Activated naive CD4-positive, alpha-beta T cell treated with anti-CD3 and anti-CD28 coated beads for 36 hours (primary cell): ENCODE measurements at regions of chr1 and their contacts with region 1.

Region 1: DNA sequence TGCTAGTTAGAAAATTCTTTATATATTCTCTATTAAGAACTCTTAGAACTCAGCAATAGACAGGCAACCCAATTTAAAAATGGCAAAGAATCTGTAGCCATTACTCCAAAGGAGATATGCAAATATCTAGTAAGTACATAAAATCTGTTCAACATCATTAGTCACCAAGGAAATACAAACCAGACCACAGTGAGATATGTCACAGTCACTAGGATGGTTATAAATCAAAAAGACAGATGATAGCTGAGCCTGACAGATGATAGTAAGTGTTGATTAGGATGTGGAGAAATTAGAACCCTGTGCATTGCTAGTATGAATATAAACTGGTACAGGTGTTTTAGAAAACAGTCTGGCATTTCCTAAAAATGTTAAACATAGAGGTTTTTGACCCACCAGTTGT is 26.6 kb downstream of the SRSF11 start:
- DNase-seq: no peak
- H3K4me3 Mint-ChIP-seq: no peak overlapping the region
- H3K27ac Mint-ChIP-seq: peak overlapping the region; percentile 84
- H3K4me1 Mint-ChIP-seq: peaks cover 34% of the 10 kb centered on the region
- H3K27me3 Mint-ChIP-seq: no peaks in the 10 kb centered on the region

Region 2: DNA sequence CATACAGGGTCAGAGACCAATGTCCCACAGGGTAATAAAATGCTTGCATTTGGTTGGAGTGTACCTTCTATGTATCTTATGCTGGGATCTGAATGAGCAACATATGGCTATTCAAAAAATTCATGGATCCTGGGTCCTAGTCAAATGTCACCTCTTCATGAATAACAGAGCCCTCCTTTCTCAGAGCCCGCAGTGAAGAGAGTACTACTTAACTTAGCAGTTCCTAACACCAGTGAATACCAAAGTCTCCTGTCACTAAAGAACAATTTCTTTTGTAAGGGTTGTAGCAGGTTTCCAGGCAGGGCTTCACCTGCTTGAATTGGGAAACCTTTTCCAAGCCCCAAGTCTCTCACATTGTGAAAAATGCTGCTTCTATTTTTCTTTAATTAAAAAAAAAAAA is 1267.9 kb before region 1 on chr1:
- CTCF ChIA-PET with region 1: no interaction called
- intact Hi-C with region 1: no loop called
- DNase-seq: no peak
- H3K4me3 Mint-ChIP-seq: no peak overlapping the region
- H3K27ac Mint-ChIP-seq: no peak overlapping the region
- H3K4me1 Mint-ChIP-seq: no peaks in the 10 kb centered on the region
- H3K27me3 Mint-ChIP-seq: no peaks in the 10 kb centered on the region

Region 3: GRCh38 chr1:70205434-70206118 is 42.2 kb before region 1 on chr1 and contains the start of gene LRRC40:
- CTCF ChIA-PET with region 1: no interaction called
- intact Hi-C with region 1: loop called (anchors 1 kb)
- DNase-seq: peak; percentile 97
- H3K4me3 Mint-ChIP-seq: peak within 1 kb of the TSS; percentile 96
- H3K27ac Mint-ChIP-seq: peak within 1 kb of the TSS; percentile 95
- H3K4me1 Mint-ChIP-seq: peaks cover 62% of the 10 kb centered on the region
- H3K27me3 Mint-ChIP-seq: no peaks in the 10 kb centered on the region
- total RNA-seq, gene LRRC40: 20.4 to 20.5 TPM

Region 4: GRCh38 chr1:70509996-70510876 is 262.5 kb after region 1 on chr1:
- CTCF ChIA-PET with region 1: no interaction called
- intact Hi-C with region 1: loop called (anchors 5 kb)
- DNase-seq: no peak
- H3K4me3 Mint-ChIP-seq: no peak overlapping the region
- H3K27ac Mint-ChIP-seq: no peak overlapping the region
- H3K4me1 Mint-ChIP-seq: no peaks in the 10 kb centered on the region
- H3K27me3 Mint-ChIP-seq: peaks cover 3% of the 10 kb centered on the region

Region 5: GRCh38 chr1:70536708-70537366 is 289.1 kb after region 1 on chr1:
- CTCF ChIA-PET with region 1: no interaction called
- intact Hi-C with region 1: no loop called
- DNase-seq: no peak
- H3K4me3 Mint-ChIP-seq: no peak overlapping the region
- H3K27ac Mint-ChIP-seq: no peak overlapping the region
- H3K4me1 Mint-ChIP-seq: peaks cover 2% of the 10 kb centered on the region
- H3K27me3 Mint-ChIP-seq: peaks cover 16% of the 10 kb centered on the region